Esophagus muscularis mucosa (tissue), 4 donors: ENCODE measurements at regions of chr5 and their contacts with region 1.

Region 1: GRCh38 chr5:98773464-98774191 is at the start of gene RGMB:
- DNase-seq: peak; percentile 99
- H3K4me3 ChIP-seq: peak within 1 kb of the TSS; percentile 81 to 94 (median 90)
- H3K27ac ChIP-seq: peak within 1 kb of the TSS; percentile 93 to 94 (median 93)
- H3K4me1 ChIP-seq: peaks cover 27 to 62% (median 44%) of the 10 kb centered on the region in 4 donors
- H3K27me3 ChIP-seq: no peaks in the 10 kb centered on the region
- CTCF ChIP-seq: no peak
- EP300 ChIP-seq: no peak
- POLR2A ChIP-seq: peak; percentile 82
- total RNA-seq, gene RGMB: 145 to 198 (median 183) TPM

Region 2: DNA sequence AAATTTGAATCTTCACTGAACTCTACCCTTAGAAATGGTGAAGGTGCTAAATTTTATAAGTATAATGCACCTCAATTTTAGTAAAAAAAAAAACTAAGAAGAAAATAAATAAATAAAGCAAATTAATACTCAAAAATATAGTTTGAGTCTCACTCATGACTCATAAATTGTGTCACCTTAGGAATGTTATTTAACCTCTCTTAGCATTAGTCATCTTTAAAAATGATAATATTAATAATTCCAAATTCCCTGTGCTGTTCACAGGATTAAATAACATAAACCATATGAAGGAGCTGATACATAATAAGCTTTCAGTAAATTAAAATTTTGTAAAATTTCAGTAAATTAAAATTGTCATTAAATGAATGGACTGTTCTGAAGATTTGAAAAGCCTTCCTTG is 340.0 kb before region 1 on chr5:
- intact Hi-C with region 1: loop called (anchors 5 kb)
- DNase-seq: no peak
- H3K4me3 ChIP-seq: no peak overlapping the region
- H3K27ac ChIP-seq: peak overlapping the region; percentile 66 to 76 (median 74)
- H3K4me1 ChIP-seq: peaks cover 4 to 39% (median 31%) of the 10 kb centered on the region in 4 donors
- H3K27me3 ChIP-seq: no peaks in the 10 kb centered on the region
- CTCF ChIP-seq: no peak
- EP300 ChIP-seq: no peak
- POLR2A ChIP-seq: no peak

Region 3: GRCh38 chr5:98928873-98929696 is 155.5 kb after region 1 on chr5 and contains the start of gene CHD1:
- intact Hi-C with region 1: loop called (anchors 10 kb)
- DNase-seq: peak; percentile 99
- H3K4me3 ChIP-seq: peak within 1 kb of the TSS; percentile 84 to 94 (median 89)
- H3K27ac ChIP-seq: peak within 1 kb of the TSS; percentile 94 to 100 (median 100)
- H3K4me1 ChIP-seq: peaks cover 32 to 68% (median 59%) of the 10 kb centered on the region in 4 donors
- H3K27me3 ChIP-seq: no peaks in the 10 kb centered on the region
- CTCF ChIP-seq: no peak
- EP300 ChIP-seq: peak; percentile 91
- POLR2A ChIP-seq: peak; percentile 95
- total RNA-seq, gene CHD1: 25.8 to 69.3 (median 34.5) TPM

Region 4: GRCh38 chr5:98975682-98976407 is 202.2 kb after region 1 on chr5:
- intact Hi-C with region 1: no loop called
- DNase-seq: no peak
- H3K4me3 ChIP-seq: no peak overlapping the region
- H3K27ac ChIP-seq: no peak overlapping the region
- H3K4me1 ChIP-seq: no peaks in the 10 kb centered on the region
- H3K27me3 ChIP-seq: no peaks in the 10 kb centered on the region
- CTCF ChIP-seq: no peak
- EP300 ChIP-seq: no peak
- POLR2A ChIP-seq: no peak